Left ventricle myocardium inferior (tissue), 1 donor: ENCODE measurements at regions of chr19 and their contacts with region 1.

Region 1: DNA sequence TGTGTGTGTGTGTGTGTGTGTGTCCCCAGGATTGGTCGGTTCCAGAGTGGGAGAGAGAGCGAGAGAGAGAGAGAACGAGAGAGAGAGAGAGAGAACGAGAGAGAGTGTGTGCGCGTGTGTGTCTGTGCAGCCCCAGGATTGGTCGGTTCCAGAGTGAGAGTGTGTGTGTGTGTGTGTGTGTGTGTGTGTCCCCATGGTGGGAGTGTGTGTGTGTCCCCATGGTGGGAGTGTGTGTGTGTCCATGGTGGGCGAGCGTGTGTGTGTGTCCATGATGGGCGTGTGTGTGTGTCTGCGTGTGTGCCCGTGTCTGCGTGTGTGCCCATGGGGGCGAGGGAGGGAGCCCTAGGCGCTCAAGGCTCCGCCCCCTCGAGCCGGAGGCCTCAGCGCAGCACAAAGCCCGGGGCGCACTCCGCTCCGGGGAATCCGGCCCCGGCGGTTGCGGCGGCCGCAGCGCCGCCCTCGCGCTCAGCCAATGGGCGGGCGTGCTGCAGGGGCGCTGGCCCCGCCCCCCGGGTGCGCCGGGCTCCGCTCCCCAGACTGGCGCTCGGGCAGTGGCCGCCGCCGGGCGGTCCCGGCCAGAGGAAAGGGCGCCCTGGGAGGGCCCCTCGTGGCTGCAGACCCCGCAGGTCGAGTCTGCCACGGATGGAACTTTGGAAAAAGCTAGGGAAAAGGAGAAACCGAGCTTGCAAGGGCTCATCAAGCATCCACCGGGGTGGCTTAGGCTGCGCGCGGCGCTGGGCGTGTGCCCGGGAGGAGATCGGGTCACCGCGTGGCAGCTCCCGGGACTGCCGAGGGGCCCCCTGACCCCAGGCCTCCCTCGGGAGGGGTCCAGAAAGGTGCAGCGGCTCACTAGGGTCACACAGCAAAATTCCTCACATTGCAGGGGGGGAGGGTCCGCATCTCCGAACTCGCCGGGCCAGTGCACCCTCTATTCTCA is 96.2 kb downstream of the INSR start:
- DNase-seq: peak; percentile 94
- H3K4me3 ChIP-seq: peak overlapping the region; percentile 84
- H3K27ac ChIP-seq: peak overlapping the region; percentile 93
- H3K4me1 ChIP-seq: peaks cover 36% of the 10 kb centered on the region
- H3K27me3 ChIP-seq: no peaks in the 10 kb centered on the region
- CTCF ChIP-seq: peak; percentile 42

Region 2: GRCh38 chr19:7242601-7243258 is 44.7 kb after region 1 on chr19:
- intact Hi-C with region 1: no loop called
- DNase-seq: no peak
- H3K4me3 ChIP-seq: no peak overlapping the region
- H3K27ac ChIP-seq: peak overlapping the region; percentile 50
- H3K4me1 ChIP-seq: peaks cover 44% of the 10 kb centered on the region
- H3K27me3 ChIP-seq: no peaks in the 10 kb centered on the region
- CTCF ChIP-seq: no peak

Region 3: DNA sequence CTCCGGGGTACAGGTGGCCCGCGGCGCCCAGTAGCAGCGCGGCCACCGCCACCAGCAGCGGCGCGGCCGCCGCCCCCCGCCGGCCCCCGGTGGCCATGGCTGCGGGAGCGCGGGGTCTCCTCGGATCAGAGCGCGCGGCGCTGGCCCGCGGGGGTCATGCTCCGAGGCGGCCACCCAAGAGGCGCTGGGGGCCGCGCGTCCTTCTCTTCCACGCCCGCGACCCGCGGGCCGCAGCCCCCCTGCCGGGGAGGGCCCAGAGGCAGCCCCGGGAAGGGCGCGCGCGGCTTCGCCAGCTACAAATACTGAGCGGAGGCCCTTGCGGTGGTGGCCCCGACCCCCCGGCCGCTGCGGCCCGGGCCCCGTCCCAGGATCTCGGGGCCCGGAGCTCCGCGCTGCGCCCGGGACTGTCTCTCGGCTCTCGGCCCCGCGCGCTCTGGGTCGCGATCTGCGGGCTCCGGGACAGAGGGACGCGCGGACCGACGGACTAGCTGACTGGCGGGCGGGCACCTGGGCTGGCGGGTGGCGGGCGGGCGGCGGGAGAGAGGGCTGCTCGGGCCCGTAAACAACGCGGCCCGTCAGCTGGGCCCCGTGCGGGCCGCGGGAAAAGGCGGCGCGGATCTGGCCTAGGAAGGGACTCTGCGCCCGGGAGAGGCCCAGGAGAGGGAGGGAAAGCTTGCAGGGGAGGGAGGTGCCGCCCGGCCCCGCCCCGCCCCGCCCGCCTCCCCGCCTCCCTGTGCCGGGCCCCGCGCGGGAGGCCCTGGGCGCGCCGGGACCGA is 96.0 kb after region 1 on chr19 and contains the start of gene INSR:
- intact Hi-C with region 1: loop called (anchors 5 kb)
- DNase-seq: peak; percentile 91
- H3K4me3 ChIP-seq: peak within 1 kb of the TSS; percentile 99
- H3K27ac ChIP-seq: peak within 1 kb of the TSS; percentile 96
- H3K4me1 ChIP-seq: peaks cover 59% of the 10 kb centered on the region
- H3K27me3 ChIP-seq: no peaks in the 10 kb centered on the region
- CTCF ChIP-seq: no peak
- total RNA-seq, gene INSR: 85.3 TPM